Vagina (tissue), 2 donors: ENCODE measurements at regions of chr7 and their contacts with region 1.

Region 1: GRCh38 chr7:234655-235578 is 42.5 kb downstream of the FAM20C start:
- DNase-seq: no peak
- H3K4me3 ChIP-seq: peak overlapping the region; percentile 7 to 36
- H3K27ac ChIP-seq: peak overlapping the region; percentile 82
- H3K4me1 ChIP-seq: peaks cover 50% of the 10 kb centered on the region
- H3K27me3 ChIP-seq: no peaks in the 10 kb centered on the region
- CTCF ChIP-seq: no peak
- POLR2A ChIP-seq: no peak

Region 2: DNA sequence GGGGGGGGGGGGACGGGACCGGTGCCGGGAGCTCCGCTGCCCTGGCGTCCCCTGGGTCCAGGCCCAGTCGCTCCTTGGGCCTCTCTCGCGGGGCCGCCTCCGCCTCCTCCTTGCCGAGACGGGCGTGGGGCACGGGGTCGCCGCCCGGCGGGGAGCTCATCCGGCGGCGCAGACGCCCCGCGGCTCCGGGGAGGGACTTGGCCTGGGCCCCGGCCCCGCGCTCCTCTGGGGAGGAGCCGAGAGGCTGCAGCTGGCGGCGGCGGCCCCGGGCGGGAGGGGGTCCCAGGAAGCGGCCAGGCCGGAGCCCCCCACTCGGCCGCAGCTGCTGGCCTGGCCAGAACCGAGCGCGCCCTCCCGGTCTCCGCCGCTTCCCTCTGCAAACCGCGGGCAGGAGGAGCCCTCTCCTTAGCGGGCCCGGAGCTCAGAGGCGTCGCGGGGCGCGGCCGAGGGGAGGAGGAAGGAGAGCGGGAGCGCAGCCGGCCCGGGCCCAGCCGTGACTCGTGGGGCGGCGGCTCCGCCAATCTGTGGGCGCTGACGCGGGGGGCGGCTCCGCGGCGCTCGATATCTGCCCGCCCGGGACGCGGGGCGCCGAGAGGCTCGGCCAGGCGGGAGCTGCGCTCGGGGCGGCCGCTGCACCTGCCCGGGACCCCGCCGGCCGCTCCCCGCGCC is 42.8 kb before region 1 on chr7 and contains the start of gene FAM20C:
- intact Hi-C with region 1: loop called (anchors 5 kb)
- DNase-seq: no peak
- H3K4me3 ChIP-seq: peak within 1 kb of the TSS; percentile 50 to 84
- H3K27ac ChIP-seq: peak within 1 kb of the TSS; percentile 84
- H3K4me1 ChIP-seq: peaks cover 40% of the 10 kb centered on the region
- H3K27me3 ChIP-seq: no peaks in the 10 kb centered on the region
- CTCF ChIP-seq: no peak
- POLR2A ChIP-seq: peak in 1 of 2 donors; percentile 78
- total RNA-seq, gene FAM20C: 22.1 TPM